HEK293 (cell line): ENCODE measurements at regions of chr6 and their contacts with region 1.

Region 1: GRCh38 chr6:29649701-29650673 is 6.9 kb upstream of the MOG start:
- H3K4me3 ChIP-seq: peak overlapping the region; percentile 61
- H3K27ac ChIP-seq: peak overlapping the region; percentile 18; the same call in 1 of the 2 replicates
- H3K4me1 ChIP-seq: no peaks in the 10 kb centered on the region; the same call in 1 of the 2 replicates
- CTCF ChIP-seq: peak; percentile 93

Region 2: GRCh38 chr6:29477923-29478450 is 172.0 kb before region 1 on chr6:
- CTCF ChIA-PET with region 1: no interaction called
- POLR2A ChIA-PET with region 1: no interaction called
- H3K4me3 ChIP-seq: no peak overlapping the region
- H3K27ac ChIP-seq: no peak overlapping the region
- H3K4me1 ChIP-seq: no peaks in the 10 kb centered on the region
- CTCF ChIP-seq: no peak

Region 3: DNA sequence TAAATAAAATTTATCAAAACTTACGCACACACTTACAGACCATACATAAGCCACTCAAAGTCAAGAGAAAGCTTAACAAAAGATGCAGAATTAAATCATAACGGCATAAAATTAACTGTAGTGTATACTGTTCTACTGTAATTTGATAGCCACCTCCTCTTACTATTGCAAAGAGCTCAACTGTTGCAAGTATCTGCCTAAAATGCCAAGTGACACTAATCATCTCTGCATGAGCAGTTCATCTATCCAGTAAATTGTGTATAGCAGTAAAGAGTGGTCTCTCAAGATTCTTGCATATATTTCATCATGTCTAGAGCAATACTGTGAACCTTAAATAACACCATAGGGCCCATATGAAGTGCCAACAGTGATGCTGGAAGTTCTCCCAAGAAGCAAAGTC is 52.8 kb before region 1 on chr6:
- CTCF ChIA-PET with region 1: interaction called, 14 read pairs
- POLR2A ChIA-PET with region 1: no interaction called
- H3K4me3 ChIP-seq: no peak overlapping the region
- H3K27ac ChIP-seq: no peak overlapping the region
- H3K4me1 ChIP-seq: peaks cover 13% of the 10 kb centered on the region
- CTCF ChIP-seq: no peak

Region 4: DNA sequence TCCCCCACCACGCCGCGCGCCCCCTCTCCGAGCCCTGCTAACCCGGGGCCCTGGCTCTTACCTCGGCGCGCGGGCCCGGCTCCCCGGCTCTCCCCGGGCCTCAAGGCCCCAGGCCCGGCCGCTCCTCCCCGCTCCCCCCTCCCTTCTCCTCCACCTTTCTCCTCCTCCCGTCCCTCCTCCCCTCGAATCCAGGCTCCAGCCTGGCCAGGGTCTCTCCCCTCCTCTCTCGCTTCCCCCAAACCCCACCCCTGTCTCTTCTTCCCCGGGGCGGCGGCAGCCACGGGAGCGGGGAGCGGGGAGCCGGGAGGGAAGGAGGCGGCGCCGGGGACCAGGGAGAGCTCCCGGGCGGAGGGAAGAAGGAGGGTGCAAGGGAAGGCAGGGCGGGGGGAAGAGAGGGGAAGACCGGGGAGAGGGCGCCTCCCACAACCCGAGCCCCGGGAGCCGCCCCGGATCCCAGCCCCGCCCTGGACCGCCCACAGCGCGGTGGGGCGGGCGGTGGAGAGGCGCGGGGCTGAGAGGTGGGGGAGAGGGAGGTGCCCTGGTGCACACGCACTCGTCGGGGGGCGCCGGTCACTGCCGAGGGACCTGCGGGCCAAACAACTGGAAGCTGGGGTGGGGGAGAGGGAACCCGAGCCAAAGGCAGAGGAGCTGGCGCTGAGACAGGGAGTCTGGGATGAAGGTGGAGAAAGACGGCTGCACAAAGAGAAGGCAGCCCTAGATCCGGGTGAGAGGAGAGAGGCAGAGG is 17.0 kb before region 1 on chr6 and contains the start of gene GABBR1:
- CTCF ChIA-PET with region 1: interaction called, 105 read pairs
- POLR2A ChIA-PET with region 1: interaction called, 34 read pairs
- H3K4me3 ChIP-seq: peak within 1 kb of the TSS; percentile 77
- H3K27ac ChIP-seq: peak within 1 kb of the TSS; percentile 42; the same call in 1 of the 2 replicates
- H3K4me1 ChIP-seq: peaks cover 4% of the 10 kb centered on the region; the same call in 1 of the 2 replicates
- CTCF ChIP-seq: peak; percentile 45; the same call in 1 of the 2 replicates

Region 5: DNA sequence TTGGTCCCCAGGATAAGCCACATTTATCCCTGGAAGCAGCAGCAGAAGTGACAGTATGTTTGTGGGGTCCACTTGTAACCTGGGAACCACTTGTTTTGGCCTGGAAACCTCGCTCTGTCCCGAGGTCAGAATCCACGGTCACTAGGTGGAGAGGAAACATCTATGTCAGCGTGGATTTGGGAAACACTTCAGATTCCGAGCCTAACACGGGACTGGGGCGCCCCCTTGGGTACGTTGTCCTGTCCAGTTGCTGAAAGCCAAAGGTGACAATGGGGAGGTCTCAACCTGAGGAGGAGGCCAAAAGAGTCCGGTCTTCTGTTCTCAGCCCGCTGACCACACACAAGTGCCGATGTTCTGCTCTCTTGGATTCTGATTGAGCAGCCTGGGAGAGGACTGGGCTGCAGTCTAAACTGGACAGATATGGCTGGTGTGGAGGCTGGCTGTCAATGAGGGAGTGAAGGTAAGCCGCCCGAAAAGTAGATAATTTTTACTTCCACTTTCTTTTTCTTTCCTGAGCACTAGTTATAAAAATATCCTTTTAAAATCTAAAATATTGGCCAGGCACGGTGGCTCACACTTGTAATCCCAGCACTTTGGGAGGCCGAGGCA is 35.8 kb after region 1 on chr6:
- CTCF ChIA-PET with region 1: interaction called, 164 read pairs
- POLR2A ChIA-PET with region 1: no interaction called
- H3K4me3 ChIP-seq: no peak overlapping the region
- H3K27ac ChIP-seq: no peak overlapping the region
- H3K4me1 ChIP-seq: no peaks in the 10 kb centered on the region
- CTCF ChIP-seq: no peak

Region 6: DNA sequence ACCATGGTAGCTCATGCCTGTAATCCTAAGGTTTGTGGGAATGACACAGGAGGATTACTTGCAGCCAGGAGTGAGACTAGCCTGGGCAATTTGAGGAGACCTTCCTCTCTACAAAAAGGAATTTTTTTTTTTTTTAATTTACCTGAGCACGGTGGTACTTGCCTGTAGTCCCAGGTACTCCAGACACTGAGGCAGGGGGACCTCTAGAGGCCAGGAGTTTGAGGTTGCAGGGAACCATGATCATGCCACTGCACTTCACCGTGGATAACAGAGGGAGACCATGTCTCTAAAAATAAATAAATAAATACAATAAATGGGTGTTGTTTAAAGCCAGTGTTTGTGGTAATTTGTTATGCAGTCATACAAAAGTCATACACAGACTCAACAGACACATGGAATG is 70.9 kb after region 1 on chr6:
- CTCF ChIA-PET with region 1: interaction called, 10 read pairs
- POLR2A ChIA-PET with region 1: no interaction called
- H3K4me3 ChIP-seq: no peak overlapping the region
- H3K27ac ChIP-seq: no peak overlapping the region
- H3K4me1 ChIP-seq: no peaks in the 10 kb centered on the region; the same call in 1 of the 2 replicates
- CTCF ChIP-seq: no peak

Region 7: GRCh38 chr6:29827579-29828470 is 177.8 kb after region 1 on chr6 and contains the start of gene HLA-G:
- CTCF ChIA-PET with region 1: interaction called, 12 read pairs
- POLR2A ChIA-PET with region 1: interaction called, 3 read pairs
- H3K4me3 ChIP-seq: no peak within 1 kb of the TSS
- H3K27ac ChIP-seq: no peak within 1 kb of the TSS
- H3K4me1 ChIP-seq: no peaks in the 10 kb centered on the region
- CTCF ChIP-seq: no peak

Region 8: DNA sequence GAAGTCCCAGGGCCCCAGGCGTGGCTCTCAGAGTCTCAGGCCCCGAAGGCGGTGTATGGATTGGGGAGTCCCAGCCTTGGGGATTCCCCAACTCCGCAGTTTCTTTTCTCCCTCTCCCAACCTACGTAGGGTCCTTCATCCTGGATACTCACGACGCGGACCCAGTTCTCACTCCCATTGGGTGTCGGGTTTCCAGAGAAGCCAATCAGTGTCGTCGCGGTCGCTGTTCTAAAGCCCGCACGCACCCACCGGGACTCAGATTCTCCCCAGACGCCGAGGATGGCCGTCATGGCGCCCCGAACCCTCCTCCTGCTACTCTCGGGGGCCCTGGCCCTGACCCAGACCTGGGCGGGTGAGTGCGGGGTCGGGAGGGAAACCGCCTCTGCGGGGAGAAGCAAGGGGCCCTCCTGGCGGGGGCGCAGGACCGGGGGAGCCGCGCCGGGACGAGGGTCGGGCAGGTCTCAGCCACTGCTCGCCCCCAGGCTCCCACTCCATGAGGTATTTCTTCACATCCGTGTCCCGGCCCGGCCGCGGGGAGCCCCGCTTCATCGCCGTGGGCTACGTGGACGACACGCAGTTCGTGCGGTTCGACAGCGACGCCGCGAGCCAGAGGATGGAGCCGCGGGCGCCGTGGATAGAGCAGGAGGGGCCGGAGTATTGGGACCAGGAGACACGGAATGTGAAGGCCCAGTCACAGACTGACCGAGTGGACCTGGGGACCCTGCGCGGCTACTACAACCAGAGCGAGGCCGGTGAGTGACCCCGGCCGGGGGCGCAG is 292.5 kb after region 1 on chr6 and contains the start of gene HLA-A:
- CTCF ChIA-PET with region 1: no interaction called
- POLR2A ChIA-PET with region 1: no interaction called
- H3K4me3 ChIP-seq: peak within 1 kb of the TSS; percentile 65
- H3K27ac ChIP-seq: peak within 1 kb of the TSS; percentile 62; the same call in 1 of the 2 replicates
- H3K4me1 ChIP-seq: no peaks in the 10 kb centered on the region
- CTCF ChIP-seq: peak; percentile 68